BJ (cell line): ENCODE measurements at regions of chr13 and their contacts with region 1.

Region 1: GRCh38 chr13:99626461-99627082 is 125.3 kb downstream of the TM9SF2 start:
- DNase-seq: peak; percentile 56
- H3K4me3 ChIP-seq: no peak overlapping the region
- H3K27me3 ChIP-seq: no peaks in the 10 kb centered on the region
- CTCF ChIP-seq: no peak

Region 2: DNA sequence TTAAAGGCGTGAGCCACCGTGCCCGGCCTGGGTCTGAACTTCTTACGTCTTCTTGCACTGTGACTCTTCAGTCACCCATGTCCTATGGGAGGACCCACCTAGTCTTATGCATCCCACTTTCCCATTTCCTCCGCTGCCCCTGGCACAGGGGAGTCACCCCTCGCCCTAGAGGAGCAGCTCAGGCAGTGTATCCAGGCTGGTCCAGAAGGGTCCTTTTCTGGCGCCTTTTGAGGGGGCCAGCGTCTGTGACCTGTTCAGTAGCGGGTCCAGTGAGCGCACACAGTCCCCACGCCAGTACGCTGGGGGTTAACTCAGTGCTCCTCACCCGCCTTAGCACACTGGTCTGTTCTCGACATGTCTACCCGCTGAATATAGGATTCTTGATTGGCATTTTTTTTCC is 18.2 kb before region 1 on chr13:
- CTCF ChIA-PET with region 1: interaction called, 3 read pairs
- POLR2A ChIA-PET with region 1: interaction called, 11 read pairs
- DNase-seq: no peak
- H3K4me3 ChIP-seq: no peak overlapping the region
- H3K27me3 ChIP-seq: no peaks in the 10 kb centered on the region; the same call in none of the 2 replicates
- CTCF ChIP-seq: no peak